ENCODE measurements at regions of chr17 and their contacts with region 1.

Region 1: GRCh38 chr17:42677008-42677857 is 439 bp upstream of the PLEKHH3 start:
- DNase-seq: peak; percentile 100
- ATAC-seq: peak; percentile 81
- H3K4me3 Mint-ChIP-seq: peak overlapping the region; percentile 73
- H3K27ac Mint-ChIP-seq: peak overlapping the region; percentile 85
- H3K4me1 Mint-ChIP-seq: peaks cover 59% of the 10 kb centered on the region
- H3K27me3 Mint-ChIP-seq: peaks cover 48% of the 10 kb centered on the region

Region 2: GRCh38 chr17:42566883-42567573 is 110.2 kb before region 1 on chr17 and contains the start of gene MLX:
- CTCF ChIA-PET with region 1: no interaction called
- DNase-seq: peak; percentile 94
- ATAC-seq: peak; percentile 78
- H3K4me3 Mint-ChIP-seq: peak within 1 kb of the TSS; percentile 94
- H3K27ac Mint-ChIP-seq: peak within 1 kb of the TSS; percentile 94
- H3K4me1 Mint-ChIP-seq: peaks cover 62% of the 10 kb centered on the region
- H3K27me3 Mint-ChIP-seq: no peaks in the 10 kb centered on the region
- total RNA-seq, gene MLX: 54.8 to 60.4 TPM

Region 3: DNA sequence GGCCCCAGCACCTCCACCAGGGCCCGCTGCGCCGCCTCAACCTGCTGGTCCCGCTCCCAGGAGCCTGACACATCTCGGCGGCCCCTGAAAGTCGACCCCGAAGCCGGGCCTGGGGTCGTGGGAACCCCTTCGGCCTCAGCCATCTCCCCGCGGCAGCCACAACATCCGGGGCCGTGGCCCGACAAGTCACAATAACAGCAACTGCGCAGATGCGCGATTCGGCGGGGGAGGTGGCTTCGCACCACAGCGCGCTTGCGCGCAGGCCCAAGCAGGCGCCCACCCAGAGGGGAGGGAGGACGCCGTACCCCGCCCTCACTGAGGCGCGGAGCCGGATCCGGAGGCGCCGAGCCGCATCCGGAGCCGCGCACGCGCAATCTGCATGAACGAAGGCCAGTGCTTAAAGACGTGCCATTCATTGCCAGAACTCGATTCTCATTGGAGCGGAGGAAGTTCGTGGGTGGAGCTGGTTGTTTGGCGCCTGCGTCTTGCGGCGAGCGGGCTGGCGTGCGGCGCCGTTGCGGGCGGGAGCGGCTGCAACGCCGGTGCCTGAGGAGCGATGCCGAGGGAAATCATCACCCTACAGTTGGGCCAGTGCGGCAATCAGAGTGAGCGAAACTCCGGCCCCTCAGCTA is 67.9 kb before region 1 on chr17 and contains the starts of genes RETREG3 and TUBG1:
- CTCF ChIA-PET with region 1: interaction called, 21 read pairs
- DNase-seq: peak; percentile 99
- ATAC-seq: peak; percentile 92
- H3K4me3 Mint-ChIP-seq: peak within 1 kb of the TSS; percentile 94
- H3K27ac Mint-ChIP-seq: peak within 1 kb of the TSS; percentile 92
- H3K4me1 Mint-ChIP-seq: peaks cover 47% of the 10 kb centered on the region
- H3K27me3 Mint-ChIP-seq: no peaks in the 10 kb centered on the region
- total RNA-seq, gene RETREG3: 46.7 to 54.2 TPM
- total RNA-seq, gene TUBG1: 92.3 to 103 TPM

Region 4: GRCh38 chr17:42691021-42691545 is 13.8 kb after region 1 on chr17:
- CTCF ChIA-PET with region 1: no interaction called
- DNase-seq: no peak
- ATAC-seq: no peak
- H3K4me3 Mint-ChIP-seq: no peak overlapping the region
- H3K27ac Mint-ChIP-seq: no peak overlapping the region
- H3K4me1 Mint-ChIP-seq: no peaks in the 10 kb centered on the region
- H3K27me3 Mint-ChIP-seq: no peaks in the 10 kb centered on the region

Region 5: DNA sequence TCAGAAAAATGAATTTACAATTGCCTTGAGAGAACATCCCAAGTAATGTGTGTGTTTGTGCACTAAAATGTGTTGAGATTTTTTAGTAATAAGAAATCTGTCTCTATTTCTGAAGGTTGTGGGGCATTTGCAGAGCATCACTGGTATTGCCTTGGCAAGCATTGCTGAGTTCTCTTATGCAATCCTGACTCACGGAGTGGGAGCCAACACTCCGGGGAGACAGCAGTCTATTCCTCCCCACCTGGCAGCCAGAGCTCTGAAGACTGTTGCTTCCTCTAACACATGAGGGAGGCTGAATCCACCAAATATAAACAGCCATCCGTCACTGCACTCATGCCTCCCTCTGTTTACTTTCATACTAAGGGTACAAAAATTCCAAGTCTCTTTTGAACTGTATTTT is 132.0 kb after region 1 on chr17:
- CTCF ChIA-PET with region 1: no interaction called
- DNase-seq: no peak
- ATAC-seq: no peak
- H3K4me3 Mint-ChIP-seq: no peak overlapping the region
- H3K27ac Mint-ChIP-seq: no peak overlapping the region
- H3K4me1 Mint-ChIP-seq: no peaks in the 10 kb centered on the region
- H3K27me3 Mint-ChIP-seq: no peaks in the 10 kb centered on the region

Measured in activated CD8-positive, alpha-beta memory T cell treated with anti-CD3 and anti-CD28 coated beads, Interleukin-2, amount 10 ng/mL, durations not matched to agents 7 days and 5 days (primary cell).